Astrocyte of the cerebellum (primary cell): ENCODE measurements at regions of chrX and their contacts with region 1.

Region 1: DNA sequence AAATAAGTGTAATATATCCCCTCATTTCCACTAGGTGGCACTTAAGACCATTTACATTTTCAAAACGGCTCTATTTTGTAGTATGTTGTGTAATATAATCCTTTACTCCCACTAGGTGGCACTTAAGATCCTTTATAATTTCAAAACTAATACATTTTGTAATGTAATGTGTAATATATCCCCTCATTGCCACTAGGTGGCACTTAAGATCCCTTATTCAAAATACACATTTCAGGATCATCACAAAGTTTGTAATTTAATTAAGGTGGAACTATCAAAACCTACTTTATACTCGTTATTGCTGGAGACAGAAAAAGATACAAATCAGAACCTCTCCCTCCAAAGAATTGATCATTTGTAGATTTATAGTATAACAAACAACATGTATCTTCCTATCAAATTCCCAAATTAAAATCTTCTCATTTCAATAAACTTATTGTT is 132.5 kb downstream of the ARHGAP6 start:
- DNase-seq: peak; percentile 68
- H3K4me3 ChIP-seq: no peak overlapping the region
- CTCF ChIP-seq: peak; percentile 38

Region 2: DNA sequence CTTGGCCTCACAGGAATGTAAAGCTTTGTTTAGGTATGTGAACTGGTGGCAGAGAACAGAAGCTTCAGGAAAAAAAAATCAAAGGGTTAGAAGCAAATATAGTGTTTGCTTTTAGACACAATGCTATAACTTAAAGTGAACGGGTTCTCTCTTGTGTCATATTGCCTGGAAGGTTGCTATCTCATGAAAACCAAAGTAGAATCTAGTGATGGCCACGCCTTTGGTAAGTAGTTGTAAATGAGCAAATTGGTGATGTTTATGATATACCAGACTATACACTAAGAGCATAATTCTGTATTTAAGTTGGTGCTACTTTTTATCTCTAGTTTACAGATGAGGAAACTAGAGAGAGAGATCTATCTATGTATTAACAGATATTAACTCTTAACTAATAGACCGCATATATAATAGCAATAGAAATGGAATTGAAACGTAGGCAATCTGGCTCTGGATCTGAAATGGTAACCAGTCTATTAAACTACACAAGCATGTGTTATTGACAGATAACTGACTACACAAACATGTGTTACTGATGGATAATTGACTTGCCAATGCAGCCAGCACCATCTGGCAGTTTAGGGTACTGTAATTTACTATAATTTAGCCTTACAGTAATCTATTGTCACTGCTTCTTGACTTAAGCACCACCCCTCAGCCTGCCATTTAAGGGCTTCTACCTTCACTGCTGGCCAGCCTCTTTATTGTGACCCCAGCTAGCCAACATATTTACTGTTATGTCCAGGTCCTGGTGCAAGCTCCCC is 381.3 kb before region 1 on chrX:
- in situ Hi-C with region 1: loop called (anchors 25 kb)
- DNase-seq: peak; percentile 2
- H3K4me3 ChIP-seq: no peak overlapping the region
- CTCF ChIP-seq: no peak

Region 3: GRCh38 chrX:11758400-11759171 is 225.4 kb after region 1 on chrX:
- in situ Hi-C with region 1: loop called (anchors 25 kb)
- DNase-seq: peak; percentile 31
- H3K4me3 ChIP-seq: peak overlapping the region; percentile 65
- CTCF ChIP-seq: peak; percentile 38

Region 4: GRCh38 chrX:11953615-11954014 is 420.4 kb after region 1 on chrX:
- in situ Hi-C with region 1: no loop called
- DNase-seq: peak; percentile 35
- H3K4me3 ChIP-seq: no peak overlapping the region
- CTCF ChIP-seq: no peak